ENCODE measurements at regions of chr2 and their contacts with region 1.

Region 1: DNA sequence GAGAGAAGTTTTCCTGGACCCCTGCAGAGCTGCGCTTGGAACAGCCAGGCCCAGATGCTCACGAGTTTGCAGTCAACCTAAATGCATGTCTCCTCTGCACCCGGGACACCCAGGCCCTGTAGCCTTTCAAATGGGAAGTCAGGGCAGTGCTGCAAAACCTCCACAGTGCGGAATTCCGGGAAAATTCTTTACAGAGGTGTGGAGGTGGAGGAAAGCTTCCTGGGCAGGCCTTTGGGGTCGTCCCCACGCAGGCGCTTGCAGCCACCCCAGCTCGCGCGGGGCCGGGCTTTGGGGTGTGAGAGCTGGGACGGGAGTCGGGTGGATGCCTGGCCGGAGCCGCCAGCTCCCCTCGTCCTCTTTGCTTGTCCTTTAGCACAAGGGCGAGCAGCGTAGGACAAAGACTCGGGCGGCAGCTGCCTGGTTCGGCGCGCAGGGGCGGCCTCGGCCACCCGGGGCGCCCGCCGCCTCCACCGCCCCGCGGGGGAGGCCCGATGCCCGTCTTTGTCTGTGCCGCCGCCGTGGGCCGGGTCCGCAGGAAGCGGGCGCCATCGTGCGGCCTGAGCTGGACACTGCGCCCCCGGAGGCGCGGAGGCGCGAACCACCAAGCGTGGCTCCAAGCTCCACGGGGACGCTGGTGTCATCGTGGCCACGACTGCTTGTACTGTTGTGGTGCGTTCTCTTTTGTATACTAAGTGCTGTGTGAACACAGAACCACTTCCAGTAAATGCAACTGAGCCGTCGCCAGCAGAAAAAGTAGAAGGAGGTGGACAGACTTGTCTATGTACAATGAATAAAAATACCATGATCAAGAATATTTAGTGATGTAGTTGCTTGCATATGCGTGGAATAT is 28.2 kb upstream of the BCL11A start:
- DNase-seq: peak; percentile 89
- CTCF ChIP-seq: peak; percentile 99

Region 2: GRCh38 chr2:59025157-59025757 is 1556.4 kb before region 1 on chr2:
- CTCF ChIA-PET with region 1: interaction called, 45 read pairs
- POLR2A ChIA-PET with region 1: no interaction called
- DNase-seq: peak; percentile 24
- CTCF ChIP-seq: peak; percentile 77

Region 3: DNA sequence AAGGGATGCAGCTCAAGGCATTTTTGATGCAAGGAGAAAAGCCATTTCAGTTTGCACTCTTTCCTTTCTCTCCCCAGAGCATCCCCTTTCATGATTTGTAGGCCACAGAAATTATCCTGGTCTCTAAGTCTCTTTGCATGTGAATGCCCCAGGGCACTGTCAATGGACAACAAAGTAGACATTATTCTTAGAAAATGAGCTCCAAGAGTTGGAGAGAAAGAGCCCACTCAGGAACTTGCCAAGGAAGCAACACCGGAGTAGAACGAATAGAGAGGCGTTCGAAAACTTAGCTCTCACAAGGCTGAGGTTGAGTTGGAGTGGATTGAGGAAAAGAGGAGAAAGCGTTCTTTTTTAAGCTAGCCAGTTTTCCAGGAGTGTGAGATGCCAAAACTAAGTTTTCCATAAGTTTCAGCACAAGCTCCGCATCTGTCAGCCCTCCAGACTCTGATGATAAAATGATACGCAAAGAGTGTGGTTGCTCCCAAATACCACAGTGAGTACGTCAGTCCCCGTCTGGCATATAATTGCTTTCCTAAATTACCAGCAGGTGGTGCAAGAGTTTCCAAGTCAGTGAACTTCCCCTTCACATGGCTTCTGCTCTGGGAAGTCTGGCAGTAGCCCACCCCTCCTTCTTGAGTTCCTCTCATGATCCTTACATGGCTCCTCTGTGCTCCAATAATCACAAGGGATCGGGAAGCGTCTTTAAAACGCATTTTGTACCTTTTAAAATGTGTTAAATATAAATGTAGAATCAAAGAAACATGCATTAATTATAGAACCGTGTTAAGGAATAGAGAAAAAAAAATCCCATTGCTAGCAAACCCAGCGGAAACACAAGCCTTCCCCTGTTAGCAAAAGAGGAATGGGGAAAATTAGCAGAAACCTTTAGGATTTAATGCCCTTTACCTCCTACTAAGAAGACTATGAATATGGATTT is 1279.9 kb before region 1 on chr2:
- CTCF ChIA-PET with region 1: interaction called, 12 read pairs
- POLR2A ChIA-PET with region 1: no interaction called
- DNase-seq: peak; percentile 9
- CTCF ChIP-seq: peak; percentile 47

Region 4: DNA sequence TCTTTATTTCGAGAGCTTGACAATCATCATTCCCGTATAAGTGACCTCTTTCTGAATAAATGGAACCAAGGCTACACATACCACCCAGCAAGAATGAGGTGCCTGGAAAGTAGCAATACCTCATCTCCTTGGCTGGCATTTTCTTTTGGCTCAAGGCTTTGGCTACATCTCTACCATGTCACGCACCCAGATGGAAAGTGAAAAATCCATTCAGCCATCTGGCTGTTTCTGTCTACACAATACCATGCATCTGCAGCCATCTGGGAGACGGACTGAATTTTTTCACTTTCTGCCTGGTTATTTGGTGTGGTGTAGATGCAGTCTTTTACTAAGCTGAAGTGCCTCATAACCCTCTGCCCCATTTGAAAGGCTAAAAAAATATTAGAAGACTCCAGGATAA is 595.1 kb before region 1 on chr2:
- CTCF ChIA-PET with region 1: no interaction called
- POLR2A ChIA-PET with region 1: no interaction called
- DNase-seq: no peak
- CTCF ChIP-seq: no peak

Region 5: GRCh38 chr2:60560734-60561644 is 20.7 kb before region 1 on chr2:
- CTCF ChIA-PET with region 1: interaction called, 77 read pairs
- POLR2A ChIA-PET with region 1: no interaction called
- DNase-seq: peak; percentile 41
- CTCF ChIP-seq: peak; percentile 62

Region 6: GRCh38 chr2:60569680-60570111 is 12.0 kb before region 1 on chr2:
- CTCF ChIA-PET with region 1: interaction called, 77 read pairs
- POLR2A ChIA-PET with region 1: no interaction called
- DNase-seq: no peak
- CTCF ChIP-seq: no peak

Region 7: GRCh38 chr2:60634438-60634837 is 52.8 kb after region 1 on chr2:
- CTCF ChIA-PET with region 1: interaction called, 10 read pairs
- POLR2A ChIA-PET with region 1: no interaction called
- DNase-seq: no peak
- CTCF ChIP-seq: no peak

Measured in GM10248 (cell line).